Cardiac septum (tissue), 1 donor: ENCODE measurements at regions of chr7 and their contacts with region 1.

Region 1: GRCh38 chr7:112206238-112207044 is at the starts of genes DOCK4 and ZNF277:
- DNase-seq: peak; percentile 99
- total RNA-seq, gene DOCK4: 18.5 TPM
- total RNA-seq, gene ZNF277: 16.3 TPM

Region 2: DNA sequence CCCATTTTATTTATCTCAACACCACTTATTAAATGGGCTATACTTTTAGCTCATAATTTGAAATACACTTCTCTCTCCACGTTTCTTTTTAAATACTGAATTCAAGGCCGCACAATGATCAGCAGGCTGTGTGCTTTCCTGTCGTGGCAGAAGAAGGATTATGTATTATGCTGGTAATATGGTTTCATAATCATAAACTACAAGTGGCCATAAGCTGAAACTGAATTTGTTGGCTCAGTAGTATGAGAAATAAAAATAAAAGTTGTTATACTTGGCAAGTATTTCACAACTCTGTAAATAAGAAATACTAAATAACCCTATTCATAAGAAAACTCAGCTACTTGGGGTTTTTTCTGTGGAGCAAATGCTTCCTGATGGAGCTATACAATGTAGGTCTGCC is 313.9 kb before region 1 on chr7:
- intact Hi-C with region 1: no loop called
- DNase-seq: no peak

Region 3: DNA sequence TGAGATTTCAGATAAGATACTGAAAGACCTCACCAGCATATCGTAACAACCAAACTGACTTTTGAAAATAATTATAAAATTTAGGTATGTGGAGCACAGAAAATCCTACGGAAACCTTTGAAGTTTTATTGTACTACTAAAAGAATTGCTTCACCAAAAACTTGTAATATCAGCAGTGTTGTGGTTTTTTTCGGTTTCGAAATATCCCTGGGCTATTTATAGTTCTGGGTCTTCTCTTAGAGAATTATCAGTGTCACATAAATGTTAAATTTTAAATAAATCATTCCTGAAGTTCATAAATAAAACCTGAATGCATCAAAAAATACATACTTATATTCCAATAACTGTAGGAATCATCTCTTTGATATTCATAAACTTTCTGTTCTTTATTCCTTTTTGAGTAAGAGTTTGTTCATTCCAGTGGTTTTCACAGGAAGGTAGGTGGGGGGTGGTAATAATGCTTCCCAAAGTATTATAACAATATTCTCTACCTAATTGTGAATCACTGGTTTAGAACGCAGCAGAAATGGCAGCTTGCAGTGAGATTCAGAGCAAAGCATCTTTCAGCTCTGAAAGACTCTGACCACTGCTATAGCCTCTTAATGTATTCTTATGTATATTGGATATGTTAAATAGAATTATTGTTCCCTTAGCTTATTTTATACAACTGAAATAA is 60.3 kb after region 1 on chr7:
- intact Hi-C with region 1: no loop called
- DNase-seq: no peak

Region 4: GRCh38 chr7:112383671-112384417 is 177.4 kb after region 1 on chr7:
- intact Hi-C with region 1: loop called (anchors 10 kb)
- DNase-seq: no peak